MCF 10A (cell line): ENCODE measurements at regions of chr2 and their contacts with region 1.

Region 1: DNA sequence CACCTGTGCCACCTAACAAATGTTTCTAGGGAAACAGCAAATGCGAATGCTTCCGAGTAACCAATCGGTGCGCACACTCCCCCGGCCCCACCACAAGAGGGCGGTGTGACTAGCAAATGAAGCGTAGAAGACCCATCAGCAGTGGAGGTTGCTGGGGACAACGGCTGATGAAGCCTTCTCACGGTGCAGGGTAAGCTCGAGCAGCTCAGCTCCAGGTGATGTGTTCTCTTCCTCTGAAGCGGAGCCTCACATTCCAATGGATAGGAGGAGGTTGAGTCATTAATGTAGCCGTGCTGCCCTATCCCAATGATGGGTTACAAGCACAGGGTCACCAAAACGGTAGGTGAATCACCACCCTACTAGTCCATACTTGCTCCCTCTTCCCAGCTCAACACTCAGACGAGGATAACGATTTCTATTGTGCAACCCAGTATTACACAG is 127.6 kb upstream of the TWIST2 start:
- DNase-seq: peak; percentile 98
- H3K4me3 Mint-ChIP-seq: peak overlapping the region; percentile 11
- H3K27ac Mint-ChIP-seq: peak overlapping the region; percentile 40
- H3K4me1 Mint-ChIP-seq: peaks cover 13% of the 10 kb centered on the region
- H3K27me3 Mint-ChIP-seq: no peaks in the 10 kb centered on the region
- CTCF ChIP-seq: peak; percentile 83

Region 2: DNA sequence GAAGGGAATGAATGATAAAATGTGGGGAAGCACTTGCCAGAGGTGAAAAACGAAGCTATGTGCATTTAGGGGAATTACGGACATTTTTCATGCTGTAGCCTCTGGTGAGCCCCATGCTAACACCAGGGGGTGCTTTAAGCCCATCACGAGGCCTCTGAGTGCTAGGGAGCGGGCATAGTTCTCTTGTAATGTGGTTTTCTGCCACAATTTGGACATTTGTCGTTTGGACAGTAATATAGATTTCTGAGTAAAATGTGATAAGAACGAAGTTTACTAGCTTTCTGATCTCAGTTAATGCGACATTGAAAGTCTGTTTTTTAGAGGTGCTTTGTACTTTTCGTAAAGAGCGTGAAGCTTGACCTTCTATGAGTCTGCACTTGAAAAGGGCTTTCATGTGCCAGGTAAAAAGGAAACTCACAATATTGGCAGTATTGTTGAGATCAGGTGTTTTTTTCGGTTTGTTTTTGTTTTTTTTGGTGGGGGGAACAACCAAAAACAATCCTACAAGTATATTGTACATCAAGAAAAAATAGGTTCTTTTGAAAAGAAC is 349.4 kb before region 1 on chr2:
- CTCF ChIA-PET with region 1: no interaction called
- POLR2A ChIA-PET with region 1: no interaction called
- intact Hi-C with region 1: loop called (anchors 1 kb)
- DNase-seq: peak; percentile 71
- H3K4me3 Mint-ChIP-seq: no peak overlapping the region
- H3K27ac Mint-ChIP-seq: no peak overlapping the region
- H3K4me1 Mint-ChIP-seq: peaks cover 6% of the 10 kb centered on the region
- H3K27me3 Mint-ChIP-seq: no peaks in the 10 kb centered on the region
- CTCF ChIP-seq: peak; percentile 75

Region 3: GRCh38 chr2:238784671-238785527 is 64.6 kb after region 1 on chr2:
- CTCF ChIA-PET with region 1: interaction called, 39 read pairs
- POLR2A ChIA-PET with region 1: interaction called, 36 read pairs
- intact Hi-C with region 1: loop called (anchors 1 kb)
- DNase-seq: peak; percentile 72
- H3K4me3 Mint-ChIP-seq: peak overlapping the region; percentile 14
- H3K27ac Mint-ChIP-seq: peak overlapping the region; percentile 80
- H3K4me1 Mint-ChIP-seq: peaks cover 17% of the 10 kb centered on the region
- H3K27me3 Mint-ChIP-seq: no peaks in the 10 kb centered on the region
- CTCF ChIP-seq: peak; percentile 86

Region 4: DNA sequence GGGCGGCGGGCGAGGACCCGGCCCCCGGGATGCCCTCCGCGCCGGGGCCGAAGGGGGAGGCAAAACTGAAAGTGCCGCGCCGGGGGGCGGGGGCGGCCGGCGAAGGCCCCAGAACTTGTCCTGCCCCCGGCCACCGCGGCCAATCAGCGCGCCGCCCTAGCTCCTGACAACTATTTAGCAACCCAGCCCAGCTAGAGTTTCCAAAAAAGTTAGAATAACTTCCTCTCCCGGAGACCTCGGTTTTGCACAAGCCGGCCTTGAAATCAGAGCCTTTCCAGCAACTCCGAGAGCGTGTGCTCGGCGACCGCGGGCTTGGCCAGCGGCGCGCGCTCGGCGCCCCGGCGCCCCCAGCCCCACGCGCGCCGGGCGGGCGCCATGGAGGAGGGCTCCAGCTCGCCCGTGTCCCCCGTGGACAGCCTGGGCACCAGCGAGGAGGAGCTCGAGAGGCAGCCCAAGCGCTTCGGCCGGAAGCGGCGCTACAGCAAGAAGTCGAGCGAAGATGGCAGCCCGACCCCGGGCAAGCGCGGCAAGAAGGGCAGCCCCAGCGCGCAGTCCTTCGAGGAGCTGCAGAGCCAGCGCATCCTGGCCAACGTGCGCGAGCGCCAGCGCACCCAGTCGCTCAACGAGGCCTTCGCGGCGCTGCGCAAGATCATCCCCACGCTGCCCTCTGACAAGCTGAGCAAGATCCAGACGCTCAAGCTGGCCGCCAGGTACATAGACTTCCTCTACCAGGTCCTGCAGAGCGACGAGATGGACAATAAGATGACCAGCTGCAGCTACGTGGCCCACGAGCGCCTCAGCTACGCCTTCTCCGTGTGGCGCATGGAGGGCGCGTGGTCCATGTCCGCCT is 127.8 kb after region 1 on chr2 and contains the start of gene TWIST2:
- CTCF ChIA-PET with region 1: interaction called, 3 read pairs
- POLR2A ChIA-PET with region 1: interaction called, 8 read pairs
- intact Hi-C with region 1: loop called (anchors 2 kb)
- DNase-seq: peak; percentile 90
- H3K4me3 Mint-ChIP-seq: peak within 1 kb of the TSS; percentile 89
- H3K27ac Mint-ChIP-seq: peak within 1 kb of the TSS; percentile 49
- H3K4me1 Mint-ChIP-seq: peaks cover 13% of the 10 kb centered on the region
- H3K27me3 Mint-ChIP-seq: no peaks in the 10 kb centered on the region
- CTCF ChIP-seq: no peak
- total RNA-seq, gene TWIST2: 30.2 and 31.6 TPM in 2 replicates

Region 5: DNA sequence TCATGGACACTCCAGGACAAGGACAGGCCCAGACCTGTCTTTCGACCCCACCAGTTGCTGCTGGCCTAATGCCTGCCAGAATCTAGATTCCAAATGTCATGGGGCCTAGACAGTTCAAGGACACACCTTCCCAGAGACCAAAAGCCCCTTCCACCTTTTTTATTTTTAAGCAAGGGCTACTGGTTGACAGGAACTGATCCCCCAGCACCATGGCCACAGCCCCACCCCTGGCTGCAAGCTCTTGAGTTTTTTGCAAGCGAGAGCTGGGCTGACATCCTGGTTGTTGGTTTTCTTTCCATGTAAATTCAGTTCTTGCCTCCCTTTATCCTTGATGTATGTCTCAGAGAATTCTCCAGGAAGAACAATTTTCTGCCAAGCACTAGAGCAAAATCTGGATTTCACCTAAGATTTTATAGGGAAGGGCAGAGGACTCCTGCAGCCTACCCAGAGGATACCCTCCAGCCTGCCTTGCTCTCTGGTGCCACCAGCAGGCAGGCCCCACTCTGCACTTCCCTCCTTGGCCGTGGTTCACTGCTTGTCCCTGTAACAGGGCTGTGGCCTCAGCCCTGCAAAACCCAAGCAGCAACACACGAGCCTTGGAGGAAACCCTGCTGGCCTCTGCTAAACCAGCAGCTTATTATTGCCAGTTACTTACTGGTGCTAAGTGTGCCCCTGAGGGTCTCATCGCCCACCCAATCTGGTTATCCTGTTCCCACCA is 225.3 kb after region 1 on chr2:
- CTCF ChIA-PET with region 1: interaction called, 3 read pairs
- POLR2A ChIA-PET with region 1: no interaction called
- intact Hi-C with region 1: loop called (anchors 10 kb)
- DNase-seq: peak; percentile 67
- H3K4me3 Mint-ChIP-seq: no peak overlapping the region
- H3K27ac Mint-ChIP-seq: no peak overlapping the region
- H3K4me1 Mint-ChIP-seq: peaks cover 36% of the 10 kb centered on the region
- H3K27me3 Mint-ChIP-seq: no peaks in the 10 kb centered on the region
- CTCF ChIP-seq: peak; percentile 57

Region 6: DNA sequence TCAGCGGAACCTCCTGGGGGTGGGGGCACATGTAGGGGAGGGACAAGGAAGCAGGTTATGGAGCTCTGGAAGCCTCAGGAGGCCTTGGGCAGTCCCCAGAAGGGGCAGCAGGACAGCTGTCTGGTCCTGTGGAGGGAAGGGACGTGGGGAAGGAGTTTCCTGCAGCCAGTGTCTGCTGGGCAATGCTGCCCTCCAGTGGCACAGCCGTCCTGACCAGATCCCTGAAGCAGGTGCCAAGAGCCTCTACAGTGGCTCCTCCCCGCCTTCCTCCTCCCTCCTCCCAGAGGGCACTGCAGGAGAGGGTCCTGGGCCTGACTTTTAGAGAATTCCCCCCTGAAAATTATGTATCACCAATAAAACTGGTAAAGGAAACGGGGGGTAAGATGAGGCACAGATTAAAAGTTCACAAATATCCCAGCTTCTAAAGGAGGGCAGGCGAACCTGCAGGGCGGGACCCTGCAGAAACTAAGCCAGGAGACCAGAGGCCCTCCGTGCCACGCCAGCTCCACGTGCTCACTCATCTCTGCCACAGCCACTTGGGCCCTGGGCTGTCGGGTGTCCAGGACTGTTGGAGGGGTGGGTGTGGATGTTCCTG is 386.2 kb after region 1 on chr2:
- CTCF ChIA-PET with region 1: no interaction called
- POLR2A ChIA-PET with region 1: no interaction called
- intact Hi-C with region 1: loop called (anchors 1 kb)
- DNase-seq: peak; percentile 63
- H3K4me3 Mint-ChIP-seq: no peak overlapping the region
- H3K27ac Mint-ChIP-seq: no peak overlapping the region
- H3K4me1 Mint-ChIP-seq: peaks cover 9% of the 10 kb centered on the region
- H3K27me3 Mint-ChIP-seq: no peaks in the 10 kb centered on the region
- CTCF ChIP-seq: peak; percentile 80